Transverse colon (tissue), 4 donors: ENCODE measurements at regions of chr1 and their contacts with region 1.

Region 1: GRCh38 chr1:119674835-119675289 is 26.8 kb upstream of the ZNF697 start:
- DNase-seq: peak; percentile 57
- H3K4me3 ChIP-seq: no peak overlapping the region
- H3K27ac ChIP-seq: peak overlapping the region in 1 of 4 donors; percentile 40
- H3K4me1 ChIP-seq: peaks cover 0 to 10% (median 3%) of the 10 kb centered on the region in 4 donors
- H3K27me3 ChIP-seq: no peaks in the 10 kb centered on the region
- CTCF ChIP-seq: peak in 1 of 5 experiments; percentile 36
- EP300 ChIP-seq: no peak
- POLR2A ChIP-seq: no peak

Region 2: DNA sequence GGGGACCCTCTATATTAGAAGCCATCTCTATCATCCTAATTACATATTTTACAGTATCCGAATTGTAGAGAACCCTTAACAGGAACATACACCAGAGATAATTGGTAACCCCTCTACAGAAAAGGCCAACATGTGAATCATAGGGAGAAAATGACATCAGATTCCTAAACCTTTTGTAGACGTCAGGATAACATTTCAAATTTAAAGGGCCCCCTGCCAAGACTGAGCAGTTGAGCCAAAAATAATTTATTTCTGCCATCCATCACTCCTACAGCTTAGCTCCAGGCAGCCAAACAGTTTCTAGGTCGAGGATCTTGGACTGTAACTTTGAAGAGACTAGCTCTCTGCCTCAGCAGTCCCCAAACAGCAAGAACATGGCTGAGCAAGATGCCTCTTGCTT is 48.0 kb before region 1 on chr1:
- in situ Hi-C with region 1: loop called in 1 of 4 experiments (anchors 5 kb)
- intact Hi-C with region 1: no loop called
- DNase-seq: no peak
- H3K4me3 ChIP-seq: no peak overlapping the region
- H3K27ac ChIP-seq: peak overlapping the region in 2 of 4 donors; percentile 28 to 53
- H3K4me1 ChIP-seq: peaks cover 8 to 18% (median 13%) of the 10 kb centered on the region in 4 donors
- H3K27me3 ChIP-seq: no peaks in the 10 kb centered on the region
- CTCF ChIP-seq: no peak
- EP300 ChIP-seq: no peak
- POLR2A ChIP-seq: no peak

Region 3: DNA sequence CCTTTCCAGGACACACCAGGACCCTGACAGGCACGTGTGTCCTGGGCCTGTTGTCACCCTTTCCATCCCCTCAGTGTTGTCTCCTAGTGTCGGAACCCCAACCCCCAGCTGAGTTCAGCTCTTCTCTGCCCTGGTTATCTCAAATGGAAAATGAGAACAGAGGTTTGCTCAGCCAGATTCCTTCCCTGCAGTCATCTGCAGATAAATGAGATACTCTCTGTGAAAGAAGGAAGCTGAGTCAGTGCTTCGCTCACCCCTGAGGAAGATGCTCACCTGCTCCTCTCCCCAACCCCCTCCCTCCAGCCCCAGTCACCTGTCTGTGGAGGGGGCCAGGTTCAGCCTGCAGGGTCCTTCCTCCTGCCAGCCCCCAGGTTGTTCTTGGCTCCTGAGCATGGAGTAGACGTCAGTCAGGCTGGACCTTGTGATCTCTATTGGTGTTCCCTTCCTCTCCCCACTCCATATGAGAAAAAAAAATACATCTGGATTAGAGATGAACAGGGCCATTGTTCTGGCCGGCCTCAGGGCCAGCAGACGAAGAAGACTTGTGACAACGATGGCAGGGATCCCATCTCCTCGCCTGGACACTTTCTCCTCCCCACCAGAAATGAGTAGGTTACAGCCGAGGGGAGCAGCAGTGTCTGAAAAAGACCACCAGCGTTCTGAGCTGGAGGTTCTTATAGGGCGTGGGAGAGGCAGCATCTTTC is 57.8 kb after region 1 on chr1:
- in situ Hi-C with region 1: no loop called
- intact Hi-C with region 1: no loop called
- DNase-seq: no peak
- H3K4me3 ChIP-seq: no peak overlapping the region
- H3K27ac ChIP-seq: no peak overlapping the region
- H3K4me1 ChIP-seq: peaks cover 0 to 3% (median 1%) of the 10 kb centered on the region in 4 donors
- H3K27me3 ChIP-seq: no peaks in the 10 kb centered on the region
- CTCF ChIP-seq: no peak
- EP300 ChIP-seq: no peak
- POLR2A ChIP-seq: no peak